Panc1 (cell line): ENCODE measurements at regions of chr9 and their contacts with region 1.

Region 1: GRCh38 chr9:130946778-130947617 is 8.0 kb upstream of the FIBCD1 start:
- DNase-seq: no peak
- ATAC-seq: no peak
- H3K4me3 ChIP-seq: no peak overlapping the region
- H3K27ac ChIP-seq: no peak overlapping the region
- H3K4me1 ChIP-seq: no peaks in the 10 kb centered on the region
- H3K27me3 ChIP-seq: no peaks in the 10 kb centered on the region
- CTCF ChIP-seq: no peak

Region 2: GRCh38 chr9:130423272-130423671 is 523.7 kb before region 1 on chr9:
- CTCF ChIA-PET with region 1: no interaction called
- POLR2A ChIA-PET with region 1: interaction called, 13 read pairs
- in situ Hi-C with region 1: no loop called
- intact Hi-C with region 1: no loop called
- DNase-seq: no peak
- ATAC-seq: no peak
- H3K4me3 ChIP-seq: no peak overlapping the region
- H3K27ac ChIP-seq: no peak overlapping the region
- H3K4me1 ChIP-seq: no peaks in the 10 kb centered on the region
- H3K27me3 ChIP-seq: no peaks in the 10 kb centered on the region
- CTCF ChIP-seq: no peak

Region 3: GRCh38 chr9:130701056-130702022 is 245.7 kb before region 1 on chr9:
- CTCF ChIA-PET with region 1: no interaction called
- POLR2A ChIA-PET with region 1: no interaction called
- in situ Hi-C with region 1: no loop called
- intact Hi-C with region 1: no loop called
- DNase-seq: no peak
- ATAC-seq: peak; percentile 93
- H3K4me3 ChIP-seq: no peak overlapping the region
- H3K27ac ChIP-seq: no peak overlapping the region
- H3K4me1 ChIP-seq: no peaks in the 10 kb centered on the region; the same call in 1 of the 2 replicates
- H3K27me3 ChIP-seq: no peaks in the 10 kb centered on the region
- CTCF ChIP-seq: peak; percentile 91

Region 4: DNA sequence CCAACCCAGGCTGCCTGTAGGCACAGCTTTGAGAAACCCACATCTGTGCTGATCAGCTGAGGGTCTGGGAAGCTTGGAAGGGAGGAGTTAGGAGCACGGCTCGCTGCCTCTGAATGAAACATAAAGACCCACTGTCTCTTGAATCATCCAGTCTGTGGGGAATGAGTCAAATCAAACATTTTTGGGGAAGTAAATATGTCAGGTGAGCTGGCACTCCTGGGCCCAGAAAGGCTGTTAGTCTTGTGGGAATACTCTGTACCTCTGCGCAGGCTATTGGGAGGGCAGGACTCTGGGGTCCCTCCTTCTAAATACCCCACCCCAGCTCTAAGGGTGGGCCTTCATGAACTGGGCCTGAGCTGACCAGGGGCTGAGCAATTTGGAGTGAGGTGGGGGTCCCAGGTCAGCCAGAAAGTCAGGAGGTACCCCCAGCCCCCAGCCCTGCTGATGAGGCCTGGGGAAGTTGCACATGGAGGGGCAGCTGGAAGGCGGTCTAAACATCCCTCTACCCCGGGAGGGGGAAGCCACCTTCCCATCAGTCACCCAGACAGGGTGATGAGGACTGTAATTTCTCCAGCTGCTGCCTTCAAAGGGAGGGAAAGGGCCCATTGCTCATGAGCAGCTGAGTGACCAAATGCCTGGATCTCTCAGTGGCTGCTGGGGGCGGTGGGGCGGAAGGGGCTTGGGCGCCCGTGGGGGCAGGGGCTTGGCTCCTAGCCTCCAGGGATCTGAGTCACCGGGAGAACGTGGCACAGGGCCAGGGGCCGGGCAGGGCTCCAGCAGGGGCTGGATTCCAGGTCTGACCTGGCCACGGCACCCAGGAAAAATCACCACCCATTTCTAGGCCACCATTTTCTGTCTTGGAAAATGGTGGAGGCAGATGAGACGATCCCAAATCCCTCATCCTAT is 18.8 kb before region 1 on chr9:
- CTCF ChIA-PET with region 1: no interaction called
- POLR2A ChIA-PET with region 1: no interaction called
- in situ Hi-C with region 1: no loop called
- intact Hi-C with region 1: no loop called
- DNase-seq: no peak
- ATAC-seq: peak; percentile 48
- H3K4me3 ChIP-seq: no peak overlapping the region
- H3K27ac ChIP-seq: no peak overlapping the region
- H3K4me1 ChIP-seq: peaks cover 20% of the 10 kb centered on the region
- H3K27me3 ChIP-seq: no peaks in the 10 kb centered on the region
- CTCF ChIP-seq: no peak

Region 5: DNA sequence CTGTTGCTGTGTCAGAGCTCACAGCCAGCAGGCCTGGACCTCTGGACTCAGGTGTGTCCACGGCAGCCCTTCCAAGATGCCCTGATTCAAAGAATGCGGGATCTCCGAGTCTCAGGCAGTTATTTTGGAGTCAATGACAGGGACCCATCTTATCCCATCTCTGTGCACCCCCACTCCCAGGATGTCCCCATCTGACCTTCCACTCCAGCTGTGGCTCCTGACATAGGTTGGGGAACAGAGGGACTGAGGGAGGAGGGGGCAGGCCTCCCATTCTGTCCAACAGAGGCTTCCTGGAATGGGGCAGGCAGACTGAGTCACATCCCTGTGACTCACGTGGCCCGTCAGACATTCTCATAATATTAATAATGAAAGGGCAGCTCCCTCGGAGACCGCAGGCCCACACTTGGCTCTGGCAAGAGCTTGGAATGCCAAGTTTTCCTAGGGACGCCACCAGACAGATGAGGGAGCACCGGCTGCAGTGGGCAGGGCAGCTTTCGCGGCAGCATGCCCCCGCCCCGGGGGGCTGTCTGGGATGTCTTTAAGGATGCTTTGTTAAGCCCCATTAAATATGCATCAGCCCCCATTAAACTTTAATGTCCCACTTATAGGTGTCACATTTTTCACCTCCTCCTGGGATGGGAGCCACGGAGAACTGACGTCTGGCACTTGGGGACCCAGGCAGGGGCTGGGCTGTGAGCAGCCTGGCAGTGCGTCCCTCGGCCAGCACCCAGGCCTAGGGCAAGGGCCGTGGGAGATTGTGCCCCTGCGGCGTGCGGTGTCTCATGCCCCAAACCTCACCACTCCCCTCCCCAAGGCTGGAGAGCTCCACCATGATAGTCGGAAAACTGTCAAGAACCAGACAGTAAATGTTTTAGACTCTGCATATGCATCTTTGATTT is 15.7 kb after region 1 on chr9:
- CTCF ChIA-PET with region 1: no interaction called
- POLR2A ChIA-PET with region 1: no interaction called
- in situ Hi-C with region 1: no loop called
- intact Hi-C with region 1: no loop called
- DNase-seq: peak; percentile 65
- ATAC-seq: peak; percentile 96
- H3K4me3 ChIP-seq: no peak overlapping the region
- H3K27ac ChIP-seq: no peak overlapping the region
- H3K4me1 ChIP-seq: peaks cover 5% of the 10 kb centered on the region
- H3K27me3 ChIP-seq: no peaks in the 10 kb centered on the region
- CTCF ChIP-seq: no peak